ENCODE measurements at regions of chr13 and their contacts with region 1.

Region 1: GRCh38 chr13:40982772-40983171 is 36.3 kb downstream of the ELF1 start:
- DNase-seq: peak; percentile 85
- H3K4me3 ChIP-seq: peak overlapping the region; percentile 85
- H3K27ac ChIP-seq: peak overlapping the region; percentile 89
- H3K4me1 ChIP-seq: peaks cover 51% of the 10 kb centered on the region
- CTCF ChIP-seq: no peak

Region 2: GRCh38 chr13:40933508-40934204 is 49.1 kb before region 1 on chr13:
- CTCF ChIA-PET with region 1: no interaction called
- POLR2A ChIA-PET with region 1: interaction called, 3 read pairs
- intact Hi-C with region 1: loop called (anchors 5 kb)
- DNase-seq: peak; percentile 97
- H3K4me3 ChIP-seq: peak overlapping the region; percentile 52
- H3K27ac ChIP-seq: peak overlapping the region; percentile 95
- H3K4me1 ChIP-seq: peaks cover 58% of the 10 kb centered on the region
- CTCF ChIP-seq: no peak

Region 3: DNA sequence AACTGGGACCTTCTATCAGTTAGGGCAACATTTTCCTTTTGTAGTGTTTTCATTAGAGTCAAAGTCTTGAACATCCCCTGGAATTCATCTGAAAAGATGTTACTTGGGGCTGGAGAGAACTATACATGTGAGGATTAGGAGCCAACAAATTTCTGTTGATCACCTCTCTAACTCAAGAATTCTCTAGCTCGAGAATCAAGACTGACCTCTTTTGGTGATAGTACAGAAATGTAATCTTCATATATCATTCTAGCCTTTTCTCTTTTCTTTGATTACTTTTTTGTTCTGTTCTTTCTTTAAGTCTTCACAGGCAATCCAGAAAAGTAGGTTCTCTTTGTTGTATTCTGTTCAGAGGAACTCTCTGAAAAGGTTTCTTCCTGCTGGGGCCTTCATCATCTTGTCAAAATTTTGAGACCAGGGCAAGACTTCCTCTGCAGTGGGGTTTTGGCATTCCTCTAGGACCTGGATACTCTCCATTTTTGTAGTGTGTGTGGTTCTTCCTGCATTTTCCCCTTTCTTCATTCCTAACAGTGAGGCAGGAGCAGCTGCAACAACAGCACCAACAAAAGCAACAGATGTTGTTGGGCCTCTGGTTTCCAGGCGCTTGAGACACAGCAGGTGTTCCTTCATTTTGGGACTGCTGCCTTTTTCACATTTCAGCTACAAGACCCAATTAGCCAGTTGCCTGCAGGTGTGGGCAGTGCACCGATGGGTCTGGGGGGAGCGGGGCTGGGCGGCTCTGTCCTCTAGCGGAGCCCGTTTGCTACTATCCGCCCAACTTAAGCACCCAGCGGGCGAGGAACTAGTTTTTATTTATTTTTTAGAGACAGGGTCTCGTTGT is 10.1 kb after region 1 on chr13:
- CTCF ChIA-PET with region 1: no interaction called
- POLR2A ChIA-PET with region 1: interaction called, 16 read pairs
- intact Hi-C with region 1: loop called (anchors 1 kb)
- DNase-seq: peak; percentile 86
- H3K4me3 ChIP-seq: peak overlapping the region; percentile 35
- H3K27ac ChIP-seq: peak overlapping the region; percentile 99
- H3K4me1 ChIP-seq: peaks cover 93% of the 10 kb centered on the region
- CTCF ChIP-seq: peak; percentile 64

Region 4: DNA sequence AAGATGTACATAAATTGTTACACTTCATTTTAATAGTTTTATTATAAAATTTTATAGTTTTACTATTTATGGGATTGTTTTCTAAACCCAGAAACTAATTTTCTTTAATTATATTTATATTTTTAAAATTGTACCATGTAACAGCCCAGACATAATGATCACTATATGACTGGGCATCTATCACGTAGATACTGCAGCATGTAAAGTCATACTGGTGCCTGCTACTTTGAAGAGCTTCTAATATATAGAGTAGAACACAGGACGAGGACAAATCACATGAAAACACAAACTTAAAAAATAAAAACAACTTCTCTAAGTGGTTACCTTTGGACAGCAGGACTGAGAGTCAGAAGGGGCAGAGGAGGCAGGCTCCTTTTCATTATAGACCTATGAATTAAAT is 31.1 kb after region 1 on chr13:
- CTCF ChIA-PET with region 1: interaction called, 3 read pairs
- POLR2A ChIA-PET with region 1: interaction called, 139 read pairs
- intact Hi-C with region 1: loop called (anchors 1 kb)
- DNase-seq: no peak
- H3K4me3 ChIP-seq: peak overlapping the region; percentile 84
- H3K27ac ChIP-seq: peak overlapping the region; percentile 94
- H3K4me1 ChIP-seq: peaks cover 53% of the 10 kb centered on the region
- CTCF ChIP-seq: no peak

Region 5: GRCh38 chr13:41054212-41054877 is 71.6 kb after region 1 on chr13:
- CTCF ChIA-PET with region 1: no interaction called
- POLR2A ChIA-PET with region 1: interaction called, 4 read pairs
- intact Hi-C with region 1: loop called (anchors 2 kb)
- DNase-seq: peak; percentile 84
- H3K4me3 ChIP-seq: peak overlapping the region; percentile 64
- H3K27ac ChIP-seq: peak overlapping the region; percentile 75
- H3K4me1 ChIP-seq: peaks cover 94% of the 10 kb centered on the region
- CTCF ChIP-seq: peak; percentile 94